ENCODE measurements at regions of chr12 and their contacts with region 1.

Region 1: DNA sequence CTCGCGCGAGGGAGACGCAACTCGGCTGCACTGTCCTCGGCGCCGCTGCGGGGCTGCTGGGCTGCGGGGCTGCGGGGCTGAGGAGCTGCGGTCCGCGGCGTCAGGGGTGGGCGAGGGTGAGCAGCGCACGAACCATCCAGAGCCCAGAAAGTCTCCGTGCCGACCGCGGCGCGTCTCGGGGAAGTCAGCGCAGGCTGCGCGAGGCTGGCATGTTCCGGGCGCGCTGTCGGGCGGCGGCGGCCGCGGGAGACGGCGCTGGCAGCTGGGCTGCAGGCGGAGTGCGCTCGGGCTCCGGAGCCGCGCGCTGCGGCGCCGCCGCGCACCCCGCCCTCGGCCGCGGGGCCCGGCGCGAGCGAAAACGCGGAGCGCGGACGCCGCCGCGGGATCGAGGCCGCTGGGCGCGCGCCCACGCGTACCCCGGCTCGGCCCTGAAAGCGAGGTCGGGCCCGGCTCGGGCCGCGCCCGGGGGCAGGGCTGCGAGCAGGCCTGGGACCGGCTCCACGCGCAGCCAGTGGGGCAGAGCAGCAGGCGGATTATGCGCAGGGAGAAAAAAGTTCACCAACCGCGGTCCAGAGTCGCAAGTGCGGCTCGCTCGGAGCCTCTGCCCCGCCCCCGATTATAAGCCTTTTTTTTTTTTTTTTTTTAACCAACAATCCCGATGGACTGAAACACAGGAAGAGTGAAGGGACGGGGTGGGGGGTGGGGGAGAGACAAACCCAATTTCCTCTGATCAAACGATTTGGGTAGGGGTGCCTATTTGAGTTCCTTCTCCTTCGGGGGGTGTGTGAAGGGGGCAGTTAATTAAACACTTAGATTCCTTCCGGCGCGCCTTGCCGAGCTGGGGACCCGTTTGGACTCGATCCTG is at the start of gene PRICKLE1:
- DNase-seq: peak in 1 of 2 donors; percentile 72
- H3K4me3 ChIP-seq: peak within 1 kb of the TSS; percentile 77 to 89
- H3K27ac ChIP-seq: peak within 1 kb of the TSS; percentile 23 to 55
- H3K4me1 ChIP-seq: peaks cover 5 to 13% of the 10 kb centered on the region in 2 donors
- H3K27me3 ChIP-seq: no peaks in the 10 kb centered on the region
- CTCF ChIP-seq: no peak
- total RNA-seq, gene PRICKLE1: 1.8 TPM

Region 2: DNA sequence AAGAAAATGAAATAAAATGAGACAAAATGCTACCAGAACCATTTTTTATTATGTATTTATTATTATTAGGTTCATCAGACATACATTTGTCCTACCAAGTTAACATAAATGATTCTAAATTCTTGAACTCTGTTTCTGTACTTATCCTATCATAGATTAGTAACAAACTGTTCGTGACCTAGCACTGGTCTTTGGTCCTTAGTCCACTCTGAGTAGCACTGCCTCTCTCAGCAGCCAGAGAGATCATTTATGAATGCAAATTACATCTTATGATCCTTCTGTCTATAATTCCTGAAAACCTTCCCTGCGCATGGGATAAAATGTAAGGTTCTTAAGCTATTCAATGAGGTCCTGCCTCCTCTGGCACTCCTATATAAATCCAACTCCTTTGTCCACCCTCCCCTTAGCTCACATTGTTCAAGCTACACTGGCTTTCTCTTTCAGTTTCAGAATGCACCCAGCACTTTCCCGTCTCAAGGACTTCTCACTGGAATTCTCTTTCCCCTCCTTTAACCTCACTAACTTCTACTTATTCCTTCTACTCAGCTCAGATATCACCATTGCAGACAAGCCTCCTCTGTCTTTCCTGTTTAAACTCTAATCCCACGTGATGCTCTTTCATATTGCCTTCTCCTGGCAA is 1384.5 kb before region 1 on chr12:
- intact Hi-C with region 1: loop called (anchors 10 kb)
- DNase-seq: no peak
- H3K4me3 ChIP-seq: peak overlapping the region; percentile 47 to 52
- H3K27ac ChIP-seq: peak overlapping the region; percentile 53 to 74
- H3K4me1 ChIP-seq: peaks cover 0 to 3% of the 10 kb centered on the region in 2 donors
- H3K27me3 ChIP-seq: no peaks in the 10 kb centered on the region
- CTCF ChIP-seq: no peak

Region 3: GRCh38 chr12:42144408-42145196 is 445.1 kb before region 1 on chr12 and contains the start of gene GXYLT1:
- intact Hi-C with region 1: loop called (anchors 5 kb)
- DNase-seq: peak; percentile 66 to 94
- H3K4me3 ChIP-seq: peak within 1 kb of the TSS; percentile 87 to 91
- H3K27ac ChIP-seq: peak within 1 kb of the TSS; percentile 73 to 92
- H3K4me1 ChIP-seq: peaks cover 3 to 8% of the 10 kb centered on the region in 2 donors
- H3K27me3 ChIP-seq: no peaks in the 10 kb centered on the region
- CTCF ChIP-seq: no peak
- total RNA-seq, gene GXYLT1: 12.3 TPM

Region 4: DNA sequence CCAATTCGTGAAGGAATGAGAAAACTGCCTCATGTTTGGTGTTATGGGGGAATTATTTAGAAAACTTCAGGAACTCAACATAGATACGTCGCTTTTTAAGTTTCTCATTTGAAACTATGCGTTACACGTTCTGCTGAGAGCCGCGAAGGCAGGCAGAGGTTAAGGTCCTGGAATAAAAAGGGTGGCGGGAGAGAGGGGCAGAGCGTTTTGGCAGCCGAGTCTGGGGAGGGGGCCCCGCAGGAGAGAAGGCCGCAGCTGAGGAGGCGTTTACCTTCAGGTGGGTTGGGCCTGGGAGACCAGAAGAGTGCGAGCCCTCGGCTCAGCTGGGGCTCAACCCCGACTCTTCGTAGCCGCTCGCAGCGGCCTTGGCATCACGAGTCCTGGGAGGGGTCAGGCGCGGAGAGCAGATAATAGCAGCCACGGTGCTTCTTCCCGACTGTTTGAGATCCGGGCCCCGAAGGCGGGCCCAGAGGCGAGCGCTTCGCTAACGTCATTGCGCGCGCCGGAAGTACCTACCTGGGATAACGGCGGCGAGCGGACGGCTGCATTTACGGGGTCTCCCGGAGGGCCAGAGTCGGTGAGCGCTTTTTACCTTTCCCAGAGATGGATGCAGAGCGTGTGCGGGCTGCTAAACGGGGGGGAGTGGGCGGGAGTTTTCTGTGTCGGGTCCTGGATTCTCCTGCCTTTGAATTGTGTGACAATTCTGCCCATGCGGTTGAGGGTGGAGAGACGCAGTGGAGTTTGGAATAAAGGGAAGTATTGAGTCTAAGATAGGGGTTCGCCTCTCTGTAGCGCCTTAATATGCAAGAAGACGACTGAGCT is 263.8 kb before region 1 on chr12 and contains the starts of genes PPHLN1 and ZCRB1:
- intact Hi-C with region 1: loop called (anchors 10 kb)
- DNase-seq: peak; percentile 33 to 86
- H3K4me3 ChIP-seq: peak within 1 kb of the TSS; percentile 78 to 82
- H3K27ac ChIP-seq: peak within 1 kb of the TSS; percentile 84 to 89
- H3K4me1 ChIP-seq: peaks cover 0 to 13% of the 10 kb centered on the region in 2 donors
- H3K27me3 ChIP-seq: no peaks in the 10 kb centered on the region
- CTCF ChIP-seq: no peak
- total RNA-seq, gene PPHLN1: 1.7 TPM
- total RNA-seq, gene ZCRB1: 4.4 TPM